HCT116 (cell line): ENCODE measurements at regions of chr17 and their contacts with region 1.

Region 1: GRCh38 chr17:60971515-60972369 is 294.1 kb downstream of the BCAS3 start:
- DNase-seq: peak; percentile 51
- ATAC-seq: peak; percentile 98
- H3K4me3 ChIP-seq: no peak overlapping the region
- H3K27ac ChIP-seq: no peak overlapping the region
- H3K4me1 ChIP-seq: no peaks in the 10 kb centered on the region
- H3K27me3 ChIP-seq: no peaks in the 10 kb centered on the region
- CTCF ChIP-seq: peak; percentile 80 to 94 (median 81); a peak in 5 of 6 replicates
- POLR2A ChIP-seq: no peak
- RAD21 ChIP-seq: peak; percentile 88

Region 2: GRCh38 chr17:60720763-60721531 is 250.8 kb before region 1 on chr17:
- CTCF ChIA-PET with region 1: interaction called, 10 read pairs
- POLR2A ChIA-PET with region 1: no interaction called
- RAD21 ChIA-PET with region 1: interaction called, 5 read pairs
- intact Hi-C with region 1: no loop called
- DNase-seq: peak; percentile 60
- ATAC-seq: peak; percentile 90
- H3K4me3 ChIP-seq: no peak overlapping the region
- H3K27ac ChIP-seq: no peak overlapping the region
- H3K4me1 ChIP-seq: no peaks in the 10 kb centered on the region
- H3K27me3 ChIP-seq: no peaks in the 10 kb centered on the region
- CTCF ChIP-seq: peak; percentile 86 to 99 (median 96)
- POLR2A ChIP-seq: no peak
- RAD21 ChIP-seq: peak; percentile 92

Region 3: GRCh38 chr17:60941028-60941427 is 30.7 kb before region 1 on chr17:
- CTCF ChIA-PET with region 1: interaction called, 11 read pairs
- POLR2A ChIA-PET with region 1: no interaction called
- RAD21 ChIA-PET with region 1: no interaction called
- intact Hi-C with region 1: no loop called
- DNase-seq: no peak
- ATAC-seq: no peak
- H3K4me3 ChIP-seq: no peak overlapping the region
- H3K27ac ChIP-seq: no peak overlapping the region
- H3K4me1 ChIP-seq: no peaks in the 10 kb centered on the region
- H3K27me3 ChIP-seq: no peaks in the 10 kb centered on the region
- CTCF ChIP-seq: no peak
- POLR2A ChIP-seq: no peak
- RAD21 ChIP-seq: no peak

Region 4: GRCh38 chr17:60952720-60953119 is 19.0 kb before region 1 on chr17:
- CTCF ChIA-PET with region 1: interaction called, 11 read pairs
- POLR2A ChIA-PET with region 1: no interaction called
- RAD21 ChIA-PET with region 1: no interaction called
- intact Hi-C with region 1: no loop called
- DNase-seq: no peak
- ATAC-seq: no peak
- H3K4me3 ChIP-seq: no peak overlapping the region
- H3K27ac ChIP-seq: no peak overlapping the region
- H3K4me1 ChIP-seq: no peaks in the 10 kb centered on the region
- H3K27me3 ChIP-seq: no peaks in the 10 kb centered on the region
- CTCF ChIP-seq: no peak
- POLR2A ChIP-seq: no peak
- RAD21 ChIP-seq: no peak

Region 5: GRCh38 chr17:60989379-60989778 is 17.6 kb after region 1 on chr17:
- CTCF ChIA-PET with region 1: interaction called, 21 read pairs
- POLR2A ChIA-PET with region 1: no interaction called
- RAD21 ChIA-PET with region 1: no interaction called
- intact Hi-C with region 1: no loop called
- DNase-seq: no peak
- ATAC-seq: no peak
- H3K4me3 ChIP-seq: no peak overlapping the region
- H3K27ac ChIP-seq: no peak overlapping the region
- H3K4me1 ChIP-seq: no peaks in the 10 kb centered on the region
- H3K27me3 ChIP-seq: no peaks in the 10 kb centered on the region
- CTCF ChIP-seq: no peak
- POLR2A ChIP-seq: no peak
- RAD21 ChIP-seq: no peak

Region 6: DNA sequence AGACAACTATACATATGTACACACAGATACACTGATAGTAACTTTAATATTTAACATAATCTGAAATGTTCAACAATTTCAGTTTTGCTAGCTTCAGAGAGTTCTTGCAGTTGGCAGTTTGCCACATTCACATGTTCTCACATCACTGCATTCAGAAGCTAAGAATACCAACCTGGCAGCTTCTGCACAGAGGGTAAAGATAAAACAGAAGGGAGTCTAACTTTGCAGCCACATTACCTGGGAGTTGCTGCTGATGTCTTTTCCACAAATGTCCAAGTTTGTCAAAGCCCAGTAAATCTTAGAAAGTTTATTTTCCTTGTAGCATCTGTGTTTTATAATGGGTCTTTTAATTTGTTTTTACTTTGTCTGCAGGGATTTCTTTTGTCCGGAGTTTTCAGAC is 37.9 kb after region 1 on chr17:
- CTCF ChIA-PET with region 1: no interaction called
- POLR2A ChIA-PET with region 1: no interaction called
- RAD21 ChIA-PET with region 1: no interaction called
- intact Hi-C with region 1: no loop called
- DNase-seq: no peak
- ATAC-seq: no peak
- H3K4me3 ChIP-seq: no peak overlapping the region
- H3K27ac ChIP-seq: no peak overlapping the region
- H3K4me1 ChIP-seq: no peaks in the 10 kb centered on the region
- H3K27me3 ChIP-seq: no peaks in the 10 kb centered on the region
- CTCF ChIP-seq: no peak
- POLR2A ChIP-seq: no peak
- RAD21 ChIP-seq: no peak

Region 7: GRCh38 chr17:61389670-61390478 is 418.1 kb after region 1 on chr17:
- CTCF ChIA-PET with region 1: interaction called, 14 read pairs
- POLR2A ChIA-PET with region 1: no interaction called
- RAD21 ChIA-PET with region 1: no interaction called
- intact Hi-C with region 1: loop called (anchors 1 kb)
- DNase-seq: no peak
- ATAC-seq: peak; percentile 84
- H3K4me3 ChIP-seq: no peak overlapping the region
- H3K27ac ChIP-seq: no peak overlapping the region
- H3K4me1 ChIP-seq: peaks cover 12 to 17% of the 10 kb centered on the region in 2 experiments; a peak in 3 of 4 replicates
- H3K27me3 ChIP-seq: no peaks in the 10 kb centered on the region
- CTCF ChIP-seq: peak; percentile 83 to 100 (median 100)
- POLR2A ChIP-seq: no peak
- RAD21 ChIP-seq: peak; percentile 94

Region 8: GRCh38 chr17:61551255-61551742 is 579.6 kb after region 1 on chr17:
- CTCF ChIA-PET with region 1: no interaction called
- POLR2A ChIA-PET with region 1: no interaction called
- RAD21 ChIA-PET with region 1: no interaction called
- intact Hi-C with region 1: loop called (anchors 1 kb)
- DNase-seq: peak; percentile 59
- ATAC-seq: peak; percentile 91
- H3K4me3 ChIP-seq: no peak overlapping the region
- H3K27ac ChIP-seq: peak overlapping the region; percentile 63
- H3K4me1 ChIP-seq: peaks cover 27 to 30% of the 10 kb centered on the region in 2 experiments
- H3K27me3 ChIP-seq: no peaks in the 10 kb centered on the region
- CTCF ChIP-seq: peak; percentile 82 to 95 (median 94)
- POLR2A ChIP-seq: no peak
- RAD21 ChIP-seq: peak; percentile 97

Region 9: DNA sequence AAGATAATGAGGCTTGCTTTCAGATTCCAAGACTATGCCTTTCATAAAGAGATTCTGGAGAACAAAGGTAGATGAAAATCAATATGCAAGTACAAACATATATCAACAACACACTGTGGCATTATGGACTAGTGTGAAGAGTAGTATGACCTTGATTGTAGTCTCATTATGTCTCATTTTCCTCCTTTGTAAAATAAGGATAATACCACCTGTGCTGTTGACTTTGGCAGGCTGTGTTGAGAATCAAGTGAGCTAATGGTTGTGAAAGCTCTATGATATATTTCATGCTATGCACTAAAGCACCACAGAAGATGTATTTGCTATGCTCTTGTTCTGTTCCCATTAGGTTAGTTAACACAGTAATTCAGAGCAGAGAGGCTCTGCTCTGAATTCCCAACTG is 697.8 kb after region 1 on chr17:
- CTCF ChIA-PET with region 1: no interaction called
- POLR2A ChIA-PET with region 1: no interaction called
- RAD21 ChIA-PET with region 1: no interaction called
- intact Hi-C with region 1: no loop called
- DNase-seq: no peak
- ATAC-seq: no peak
- H3K4me3 ChIP-seq: no peak overlapping the region
- H3K27ac ChIP-seq: no peak overlapping the region
- H3K4me1 ChIP-seq: no peaks in the 10 kb centered on the region
- H3K27me3 ChIP-seq: no peaks in the 10 kb centered on the region
- CTCF ChIP-seq: no peak
- POLR2A ChIP-seq: no peak
- RAD21 ChIP-seq: no peak